Right ventricle myocardium inferior (tissue), 1 donor: ENCODE measurements at regions of chr15 and their contacts with region 1.

Region 1: GRCh38 chr15:80776420-80777045 is 2.6 kb upstream of the CEMIP start:
- DNase-seq: no peak
- ATAC-seq: peak; percentile 53

Region 2: GRCh38 chr15:80455668-80456442 is 320.7 kb before region 1 on chr15:
- intact Hi-C with region 1: loop called (anchors 2 kb)
- DNase-seq: no peak
- ATAC-seq: peak; percentile 55

Region 3: GRCh38 chr15:80567721-80568157 is 208.8 kb before region 1 on chr15:
- intact Hi-C with region 1: loop called (anchors 1 kb)
- DNase-seq: no peak
- ATAC-seq: peak; percentile 79

Region 4: DNA sequence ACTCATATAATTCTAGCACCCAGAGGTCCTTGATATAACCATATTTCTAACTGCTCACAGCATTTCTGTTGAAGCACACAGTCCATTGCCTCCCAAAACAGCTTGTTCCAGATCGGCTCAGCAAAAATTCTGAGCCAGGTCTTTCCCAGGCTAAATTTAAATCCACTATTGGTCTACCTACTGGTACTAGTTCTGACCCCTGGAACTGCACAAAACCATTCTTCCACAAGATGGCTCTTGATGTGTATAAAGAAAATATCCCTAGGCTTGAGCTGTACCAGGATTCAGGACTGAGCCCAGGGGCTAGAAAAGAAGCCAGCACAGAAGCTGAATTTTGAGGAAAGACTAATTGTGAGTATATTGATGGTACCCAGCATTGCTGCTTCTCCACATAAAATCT is 156.9 kb before region 1 on chr15:
- intact Hi-C with region 1: loop called (anchors 2 kb)
- DNase-seq: no peak
- ATAC-seq: peak; percentile 50

Region 5: DNA sequence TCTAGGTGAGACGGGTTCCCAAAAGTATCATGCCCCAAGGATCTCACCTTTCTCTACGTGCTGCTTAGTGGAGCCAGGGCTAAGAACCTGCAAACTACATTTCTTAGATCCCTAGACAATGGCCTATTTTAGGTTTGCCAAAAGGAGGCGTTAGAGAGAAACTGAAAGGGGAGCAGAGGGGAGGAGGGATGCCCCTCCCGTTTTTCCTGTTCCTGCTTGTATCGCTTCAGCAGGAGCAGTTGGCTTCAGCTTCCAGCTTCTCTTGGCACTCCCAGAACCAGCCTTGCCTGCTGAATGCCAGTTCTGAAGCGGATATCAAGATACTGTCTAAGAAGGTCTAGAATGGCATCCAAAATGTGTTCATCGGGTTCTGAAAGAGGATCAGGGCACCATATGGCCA is 139.9 kb before region 1 on chr15:
- intact Hi-C with region 1: loop called (anchors 5 kb)
- DNase-seq: no peak
- ATAC-seq: peak; percentile 62

Region 6: GRCh38 chr15:80970018-80970658 is 193.6 kb after region 1 on chr15:
- intact Hi-C with region 1: loop called (anchors 1 kb)
- DNase-seq: no peak
- ATAC-seq: peak; percentile 63

Region 7: DNA sequence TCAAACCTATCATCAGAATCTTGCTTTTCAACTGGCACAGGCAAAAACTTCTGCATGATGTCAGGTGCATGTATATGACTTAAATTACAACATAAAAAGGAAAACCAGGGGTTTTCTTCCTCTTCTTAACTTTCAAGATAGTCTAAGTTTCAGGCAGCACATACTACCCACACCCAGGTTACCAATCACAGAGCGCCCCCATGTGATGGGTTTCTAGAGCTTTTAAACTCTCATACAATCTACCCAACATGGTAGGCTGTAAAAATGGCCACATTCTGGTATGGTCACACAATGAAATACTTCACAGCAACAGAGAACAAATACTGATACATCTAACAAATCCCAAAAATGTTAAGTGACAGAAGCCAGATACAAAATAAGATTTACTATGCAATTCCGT is 205.7 kb after region 1 on chr15:
- intact Hi-C with region 1: no loop called
- DNase-seq: no peak
- ATAC-seq: no peak